ENCODE measurements at regions of chr4 and their contacts with region 1.

Region 1: GRCh38 chr4:165873298-165874071 is 448 bp downstream of the TLL1 start:
- DNase-seq: peak in 1 of 2 experiments; percentile 46
- H3K4me3 ChIP-seq: peak overlapping the region; percentile 49
- H3K4me3 Mint-ChIP-seq: peak overlapping the region; percentile 78
- H3K27ac Mint-ChIP-seq: peak overlapping the region; percentile 81
- H3K4me1 ChIP-seq: peaks cover 7% of the 10 kb centered on the region; the same call in 1 of the 2 replicates
- H3K4me1 Mint-ChIP-seq: peaks cover 8% of the 10 kb centered on the region
- H3K27me3 ChIP-seq: no peaks in the 10 kb centered on the region
- H3K27me3 Mint-ChIP-seq: peaks cover 3% of the 10 kb centered on the region
- CTCF ChIP-seq: no peak

Region 2: GRCh38 chr4:165931741-165932140 is 58.3 kb after region 1 on chr4:
- CTCF ChIA-PET with region 1: no interaction called
- POLR2A ChIA-PET with region 1: no interaction called
- intact Hi-C with region 1: loop called (anchors 5 kb)
- DNase-seq: peak; percentile 12 to 35
- H3K4me3 ChIP-seq: no peak overlapping the region
- H3K4me3 Mint-ChIP-seq: no peak overlapping the region
- H3K27ac Mint-ChIP-seq: no peak overlapping the region
- H3K4me1 ChIP-seq: 0 out of 2 replicates have a peak, but pooled peaks cover 6% of the 10 kb centered on the region
- H3K4me1 Mint-ChIP-seq: no peaks in the 10 kb centered on the region
- H3K27me3 ChIP-seq: no peaks in the 10 kb centered on the region
- H3K27me3 Mint-ChIP-seq: no peaks in the 10 kb centered on the region
- CTCF ChIP-seq: no peak

Region 3: GRCh38 chr4:165945991-165946390 is 72.5 kb after region 1 on chr4:
- CTCF ChIA-PET with region 1: no interaction called
- POLR2A ChIA-PET with region 1: no interaction called
- intact Hi-C with region 1: no loop called
- DNase-seq: no peak
- H3K4me3 ChIP-seq: no peak overlapping the region
- H3K4me3 Mint-ChIP-seq: no peak overlapping the region
- H3K27ac Mint-ChIP-seq: no peak overlapping the region
- H3K4me1 ChIP-seq: no peaks in the 10 kb centered on the region
- H3K4me1 Mint-ChIP-seq: peaks cover 6% of the 10 kb centered on the region
- H3K27me3 ChIP-seq: no peaks in the 10 kb centered on the region
- H3K27me3 Mint-ChIP-seq: no peaks in the 10 kb centered on the region
- CTCF ChIP-seq: no peak

Region 4: GRCh38 chr4:165982934-165983333 is 109.4 kb after region 1 on chr4:
- CTCF ChIA-PET with region 1: no interaction called
- POLR2A ChIA-PET with region 1: no interaction called
- intact Hi-C with region 1: loop called (anchors 2 kb)
- DNase-seq: no peak
- H3K4me3 ChIP-seq: no peak overlapping the region
- H3K4me3 Mint-ChIP-seq: no peak overlapping the region
- H3K27ac Mint-ChIP-seq: no peak overlapping the region
- H3K4me1 ChIP-seq: peaks cover 6% of the 10 kb centered on the region
- H3K4me1 Mint-ChIP-seq: no peaks in the 10 kb centered on the region
- H3K27me3 ChIP-seq: no peaks in the 10 kb centered on the region
- H3K27me3 Mint-ChIP-seq: no peaks in the 10 kb centered on the region
- CTCF ChIP-seq: no peak

Region 5: GRCh38 chr4:166042510-166043055 is 169.1 kb after region 1 on chr4:
- CTCF ChIA-PET with region 1: no interaction called
- POLR2A ChIA-PET with region 1: no interaction called
- intact Hi-C with region 1: loop called (anchors 2 kb)
- DNase-seq: peak in 1 of 2 experiments; percentile 7
- H3K4me3 ChIP-seq: no peak overlapping the region
- H3K4me3 Mint-ChIP-seq: peak overlapping the region; percentile 63
- H3K27ac Mint-ChIP-seq: peak overlapping the region; percentile 56
- H3K4me1 ChIP-seq: peaks cover 9% of the 10 kb centered on the region; the same call in 1 of the 2 replicates
- H3K4me1 Mint-ChIP-seq: peaks cover 19% of the 10 kb centered on the region
- H3K27me3 ChIP-seq: no peaks in the 10 kb centered on the region
- H3K27me3 Mint-ChIP-seq: no peaks in the 10 kb centered on the region
- CTCF ChIP-seq: no peak